Activated CD8-positive, alpha-beta T cell treated with anti-CD3 and anti-CD28 coated beads for 36 hours (primary cell): ENCODE measurements at regions of chr1 and their contacts with region 1.

Region 1: GRCh38 chr1:23772049-23772853 is 6.0 kb upstream of the PITHD1 start:
- DNase-seq: peak; percentile 95
- ATAC-seq: peak; percentile 99
- H3K4me3 Mint-ChIP-seq: no peak overlapping the region
- H3K27ac Mint-ChIP-seq: no peak overlapping the region
- H3K4me1 Mint-ChIP-seq: peaks cover 32% of the 10 kb centered on the region
- H3K27me3 Mint-ChIP-seq: no peaks in the 10 kb centered on the region
- CTCF ChIP-seq: peak; percentile 90

Region 2: GRCh38 chr1:23613191-23614031 is 158.8 kb before region 1 on chr1:
- CTCF ChIA-PET with region 1: no interaction called
- POLR2A ChIA-PET with region 1: no interaction called
- intact Hi-C with region 1: no loop called
- DNase-seq: peak; percentile 85
- ATAC-seq: peak; percentile 63
- H3K4me3 Mint-ChIP-seq: peak overlapping the region; percentile 28
- H3K27ac Mint-ChIP-seq: peak overlapping the region; percentile 89
- H3K4me1 Mint-ChIP-seq: peaks cover 69% of the 10 kb centered on the region
- H3K27me3 Mint-ChIP-seq: no peaks in the 10 kb centered on the region
- CTCF ChIP-seq: no peak

Region 3: GRCh38 chr1:23634842-23635651 is 137.2 kb before region 1 on chr1:
- CTCF ChIA-PET with region 1: no interaction called
- POLR2A ChIA-PET with region 1: no interaction called
- intact Hi-C with region 1: no loop called
- DNase-seq: peak; percentile 66
- ATAC-seq: peak; percentile 90
- H3K4me3 Mint-ChIP-seq: peak overlapping the region; percentile 51
- H3K27ac Mint-ChIP-seq: peak overlapping the region; percentile 85
- H3K4me1 Mint-ChIP-seq: peaks cover 28% of the 10 kb centered on the region
- H3K27me3 Mint-ChIP-seq: no peaks in the 10 kb centered on the region
- CTCF ChIP-seq: peak; percentile 84

Region 4: GRCh38 chr1:23722652-23723051 is 49.6 kb before region 1 on chr1:
- CTCF ChIA-PET with region 1: no interaction called
- POLR2A ChIA-PET with region 1: no interaction called
- intact Hi-C with region 1: no loop called
- DNase-seq: no peak
- ATAC-seq: no peak
- H3K4me3 Mint-ChIP-seq: no peak overlapping the region
- H3K27ac Mint-ChIP-seq: no peak overlapping the region
- H3K4me1 Mint-ChIP-seq: peaks cover 26% of the 10 kb centered on the region
- H3K27me3 Mint-ChIP-seq: no peaks in the 10 kb centered on the region
- CTCF ChIP-seq: no peak

Region 5: GRCh38 chr1:23743287-23744052 is 28.8 kb before region 1 on chr1 and contains the start of gene ELOA:
- CTCF ChIA-PET with region 1: interaction called, 15 read pairs
- POLR2A ChIA-PET with region 1: interaction called, 3 read pairs
- intact Hi-C with region 1: no loop called
- DNase-seq: peak; percentile 82
- ATAC-seq: peak; percentile 96
- H3K4me3 Mint-ChIP-seq: peak within 1 kb of the TSS; percentile 82
- H3K27ac Mint-ChIP-seq: peak within 1 kb of the TSS; percentile 87
- H3K4me1 Mint-ChIP-seq: peaks cover 42% of the 10 kb centered on the region
- H3K27me3 Mint-ChIP-seq: no peaks in the 10 kb centered on the region
- CTCF ChIP-seq: no peak
- total RNA-seq, gene ELOA: 29.7 to 29.9 TPM

Region 6: GRCh38 chr1:23759277-23759676 is 13.0 kb before region 1 on chr1:
- CTCF ChIA-PET with region 1: interaction called, 14 read pairs
- POLR2A ChIA-PET with region 1: no interaction called
- intact Hi-C with region 1: no loop called
- DNase-seq: no peak
- ATAC-seq: no peak
- H3K4me3 Mint-ChIP-seq: no peak overlapping the region
- H3K27ac Mint-ChIP-seq: no peak overlapping the region
- H3K4me1 Mint-ChIP-seq: no peaks in the 10 kb centered on the region
- H3K27me3 Mint-ChIP-seq: no peaks in the 10 kb centered on the region
- CTCF ChIP-seq: no peak

Region 7: DNA sequence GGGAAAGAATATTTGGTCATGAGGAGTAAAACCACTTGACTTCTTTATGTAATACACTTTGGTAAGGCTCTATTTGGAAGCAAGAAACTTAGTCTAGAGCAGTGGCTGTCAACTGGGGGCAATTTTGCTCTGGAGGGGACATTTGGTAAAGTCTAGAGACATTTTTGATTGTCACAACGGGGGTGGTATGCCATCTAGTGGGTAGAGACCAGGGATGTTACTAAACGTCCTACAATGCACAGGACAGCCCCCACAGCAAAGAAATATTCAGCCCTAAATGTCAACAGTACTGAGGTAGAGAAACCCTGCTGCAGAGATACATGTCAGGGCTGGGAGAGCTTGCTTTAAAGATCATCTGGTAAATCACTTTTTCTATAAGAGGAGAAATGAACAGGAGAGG is 82.3 kb after region 1 on chr1:
- CTCF ChIA-PET with region 1: interaction called, 18 read pairs
- POLR2A ChIA-PET with region 1: no interaction called
- intact Hi-C with region 1: no loop called
- DNase-seq: peak; percentile 42
- ATAC-seq: peak; percentile 45
- H3K4me3 Mint-ChIP-seq: no peak overlapping the region
- H3K27ac Mint-ChIP-seq: no peak overlapping the region
- H3K4me1 Mint-ChIP-seq: no peaks in the 10 kb centered on the region
- H3K27me3 Mint-ChIP-seq: no peaks in the 10 kb centered on the region
- CTCF ChIP-seq: peak; percentile 23

Region 8: GRCh38 chr1:23916209-23917131 is 144.2 kb after region 1 on chr1:
- CTCF ChIA-PET with region 1: interaction called, 46 read pairs
- POLR2A ChIA-PET with region 1: interaction called, 3 read pairs
- intact Hi-C with region 1: no loop called
- DNase-seq: peak; percentile 83
- ATAC-seq: peak; percentile 94
- H3K4me3 Mint-ChIP-seq: no peak overlapping the region
- H3K27ac Mint-ChIP-seq: no peak overlapping the region
- H3K4me1 Mint-ChIP-seq: peaks cover 26% of the 10 kb centered on the region
- H3K27me3 Mint-ChIP-seq: no peaks in the 10 kb centered on the region
- CTCF ChIP-seq: peak; percentile 82